ENCODE measurements at regions of chr2 and their contacts with region 1.

Region 1: GRCh38 chr2:105102963-105103421 is 65.1 kb downstream of the MRPS9 start:
- DNase-seq: no peak
- ATAC-seq: no peak
- H3K4me3 Mint-ChIP-seq: no peak overlapping the region
- H3K27ac Mint-ChIP-seq: no peak overlapping the region
- H3K4me1 Mint-ChIP-seq: no peaks in the 10 kb centered on the region
- H3K27me3 Mint-ChIP-seq: no peaks in the 10 kb centered on the region

Region 2: GRCh38 chr2:104563398-104563996 is 539.5 kb before region 1 on chr2:
- CTCF ChIA-PET with region 1: no interaction called
- POLR2A ChIA-PET with region 1: no interaction called
- intact Hi-C with region 1: loop called in 1 of 2 experiments (anchors 10 kb)
- DNase-seq: no peak
- ATAC-seq: no peak
- H3K4me3 Mint-ChIP-seq: no peak overlapping the region
- H3K27ac Mint-ChIP-seq: no peak overlapping the region
- H3K4me1 Mint-ChIP-seq: no peaks in the 10 kb centered on the region
- H3K27me3 Mint-ChIP-seq: no peaks in the 10 kb centered on the region

Region 3: GRCh38 chr2:105037572-105038382 is 65.2 kb before region 1 on chr2 and contains the start of gene MRPS9:
- CTCF ChIA-PET with region 1: no interaction called
- POLR2A ChIA-PET with region 1: no interaction called
- intact Hi-C with region 1: no loop called
- DNase-seq: peak; percentile 99
- ATAC-seq: peak; percentile 99
- H3K4me3 Mint-ChIP-seq: peak within 1 kb of the TSS; percentile 86
- H3K27ac Mint-ChIP-seq: peak within 1 kb of the TSS; percentile 94
- H3K4me1 Mint-ChIP-seq: peaks cover 28% of the 10 kb centered on the region
- H3K27me3 Mint-ChIP-seq: no peaks in the 10 kb centered on the region
- total RNA-seq, gene MRPS9: 41.0 to 46.0 TPM

Measured in activated CD4-positive, alpha-beta T cell treated with anti-CD3 and anti-CD28 coated beads for 36 hours (primary cell).